Natural killer cell (primary cell): ENCODE measurements at regions of chr10 and their contacts with region 1.

Region 1: DNA sequence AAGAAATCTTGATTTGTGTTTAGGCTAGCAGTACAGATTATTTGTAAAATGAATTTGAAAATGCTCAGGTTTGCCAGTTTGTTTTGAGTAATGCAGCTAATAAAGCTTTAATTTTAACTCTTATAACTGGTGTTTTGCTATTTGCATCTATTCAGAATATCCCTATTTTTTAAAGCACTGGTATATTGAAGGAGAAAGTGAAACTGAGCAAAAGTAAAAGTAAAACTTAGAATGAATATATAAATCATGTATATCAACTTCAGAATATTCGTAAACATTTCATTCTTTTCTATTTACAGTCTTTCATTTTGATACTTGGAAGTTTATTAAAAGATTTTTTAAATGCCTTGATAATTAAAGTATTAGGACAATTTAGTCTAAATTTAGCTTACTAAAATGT is 26.2 kb downstream of the TASOR2 start:
- DNase-seq: peak in 1 of 2 donors; percentile 23
- ATAC-seq: peak in 2 of 3 donors; percentile 49 to 55
- H3K4me3 ChIP-seq: peak overlapping the region; percentile 45
- H3K4me3 Mint-ChIP-seq: peak overlapping the region; percentile 90
- H3K27ac ChIP-seq: no peak overlapping the region
- H3K27ac Mint-ChIP-seq: peak overlapping the region; percentile 88 to 93
- H3K4me1 ChIP-seq: no peaks in the 10 kb centered on the region
- H3K4me1 Mint-ChIP-seq: peaks cover 38 to 44% of the 10 kb centered on the region in 2 donors
- H3K27me3 ChIP-seq: no peaks in the 10 kb centered on the region
- H3K27me3 Mint-ChIP-seq: no peaks in the 10 kb centered on the region
- CTCF ChIP-seq: no peak

Region 2: GRCh38 chr10:5684318-5684970 is 26.4 kb before region 1 on chr10 and contains the start of gene TASOR2:
- intact Hi-C with region 1: loop called (anchors 2 kb)
- DNase-seq: peak; percentile 92 to 98
- ATAC-seq: peak; percentile 80 to 91 (median 86)
- H3K4me3 ChIP-seq: peak within 1 kb of the TSS; percentile 53
- H3K4me3 Mint-ChIP-seq: peak within 1 kb of the TSS; percentile 97
- H3K27ac ChIP-seq: peak within 1 kb of the TSS; percentile 82
- H3K27ac Mint-ChIP-seq: peak within 1 kb of the TSS; percentile 95 to 99
- H3K4me1 ChIP-seq: peaks cover 6% of the 10 kb centered on the region
- H3K4me1 Mint-ChIP-seq: peaks cover 33 to 36% of the 10 kb centered on the region in 2 donors
- H3K27me3 ChIP-seq: no peaks in the 10 kb centered on the region
- H3K27me3 Mint-ChIP-seq: peaks cover under 1 to 12% of the 10 kb centered on the region in 2 donors
- CTCF ChIP-seq: no peak
- total RNA-seq, gene TASOR2: 64.4 to 88.7 (median 66.4) TPM

Region 3: GRCh38 chr10:5692461-5693358 is 18.1 kb before region 1 on chr10:
- intact Hi-C with region 1: loop called (anchors 1 kb)
- DNase-seq: peak; percentile 80 to 81
- ATAC-seq: peak; percentile 95 to 97 (median 96)
- H3K4me3 ChIP-seq: peak overlapping the region; percentile 35
- H3K4me3 Mint-ChIP-seq: peak overlapping the region; percentile 86
- H3K27ac ChIP-seq: peak overlapping the region; percentile 67
- H3K27ac Mint-ChIP-seq: peak overlapping the region; percentile 92 to 97
- H3K4me1 ChIP-seq: peaks cover 15% of the 10 kb centered on the region
- H3K4me1 Mint-ChIP-seq: peaks cover 51 to 54% of the 10 kb centered on the region in 2 donors
- H3K27me3 ChIP-seq: no peaks in the 10 kb centered on the region
- H3K27me3 Mint-ChIP-seq: no peaks in the 10 kb centered on the region
- CTCF ChIP-seq: no peak